ENCODE measurements at regions of chr6 and their contacts with region 1.

Region 1: DNA sequence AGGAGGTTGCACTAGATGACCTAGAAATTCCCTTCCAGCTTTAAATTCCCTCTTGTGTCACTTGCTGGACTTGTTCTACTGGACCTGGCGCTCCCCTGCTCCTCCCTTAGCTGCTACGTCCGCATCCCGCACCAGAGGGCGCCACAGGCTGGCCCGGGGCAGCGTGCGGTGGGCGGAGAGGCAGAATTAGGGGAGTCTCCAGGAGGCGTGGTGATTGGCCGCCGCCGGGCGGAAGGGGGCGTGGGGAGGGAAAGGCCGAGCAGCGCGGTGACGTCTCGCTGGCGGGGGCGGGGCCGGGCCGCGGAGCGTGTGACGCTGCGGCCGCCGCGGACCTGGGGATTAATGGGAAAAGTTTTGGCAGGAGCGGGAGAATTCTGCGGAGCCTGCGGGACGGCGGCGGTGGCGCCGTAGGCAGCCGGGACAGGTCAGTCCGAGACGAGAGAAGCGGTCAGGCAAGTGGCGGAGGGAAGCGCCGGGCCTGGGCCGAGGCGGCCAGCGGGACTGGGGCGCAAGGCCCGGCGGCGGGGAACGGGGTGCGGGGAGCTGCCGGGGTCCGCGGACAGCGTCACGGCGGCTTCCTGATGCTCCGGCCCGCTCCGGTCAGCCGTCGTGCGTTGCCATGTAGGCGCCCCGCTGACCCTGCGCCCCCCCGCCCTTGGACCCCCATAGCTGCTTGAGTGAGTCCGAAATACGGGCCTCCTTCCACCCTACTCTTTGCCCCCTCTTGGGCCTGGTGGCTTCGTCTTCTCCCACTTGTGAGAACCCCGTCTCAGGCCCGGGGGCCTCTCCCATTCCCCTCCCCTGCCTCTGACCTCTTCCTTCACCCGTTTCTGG is at the start of gene PPARD:
- DNase-seq: peak; percentile 38
- H3K4me3 ChIP-seq: peak within 1 kb of the TSS; percentile 84
- CTCF ChIP-seq: peak; percentile 100

Region 2: DNA sequence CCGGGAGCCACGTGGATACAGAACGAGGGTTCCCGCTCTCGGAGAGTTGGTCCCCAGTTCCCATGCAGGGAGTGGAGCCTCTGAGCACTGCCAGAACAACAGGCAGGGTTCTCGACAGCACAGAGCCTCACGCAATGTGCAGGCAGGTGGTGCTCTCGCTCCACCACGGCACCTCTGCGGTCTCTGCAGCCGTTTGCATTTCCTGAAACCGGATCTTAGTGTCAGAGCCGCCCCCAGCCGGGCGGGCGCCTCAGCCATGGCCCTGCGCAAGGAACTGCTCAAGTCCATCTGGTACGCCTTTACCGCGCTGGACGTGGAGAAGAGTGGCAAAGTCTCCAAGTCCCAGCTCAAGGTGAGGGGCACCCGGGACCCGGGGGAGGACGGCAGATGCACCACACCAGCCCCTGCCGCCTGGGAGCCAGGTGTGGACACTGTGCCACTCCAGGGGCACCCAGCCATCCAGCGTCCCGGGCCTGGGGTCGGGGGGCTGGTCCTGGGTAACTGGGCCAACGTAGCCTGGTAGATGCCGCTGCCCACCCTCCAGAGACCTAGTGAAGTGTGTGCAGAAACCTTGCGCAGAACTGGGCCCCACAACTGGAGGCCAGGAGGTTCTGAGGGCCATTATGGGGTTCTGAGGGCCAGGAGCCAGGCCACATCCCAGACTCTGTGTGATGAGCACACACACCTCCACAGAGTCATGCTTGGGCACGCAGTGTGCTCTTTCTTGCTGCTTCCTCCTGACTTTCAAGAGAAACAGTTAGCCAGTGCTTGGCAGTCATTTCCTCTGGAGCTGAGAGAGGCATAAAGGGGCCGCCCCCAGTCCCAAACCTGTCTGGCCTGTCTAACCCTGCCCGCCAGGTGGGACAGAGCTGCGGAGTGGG is 44.6 kb before region 1 on chr6 and contains the start of gene DEF6:
- CTCF ChIA-PET with region 1: interaction called, 15 read pairs
- POLR2A ChIA-PET with region 1: no interaction called
- DNase-seq: peak; percentile 17
- H3K4me3 ChIP-seq: peak within 1 kb of the TSS; percentile 55
- CTCF ChIP-seq: peak; percentile 80

Region 3: GRCh38 chr6:35354361-35355135 is 12.1 kb after region 1 on chr6:
- CTCF ChIA-PET with region 1: interaction called, 41 read pairs
- POLR2A ChIA-PET with region 1: interaction called, 5 read pairs
- DNase-seq: no peak
- H3K4me3 ChIP-seq: no peak overlapping the region
- CTCF ChIP-seq: no peak

Region 4: DNA sequence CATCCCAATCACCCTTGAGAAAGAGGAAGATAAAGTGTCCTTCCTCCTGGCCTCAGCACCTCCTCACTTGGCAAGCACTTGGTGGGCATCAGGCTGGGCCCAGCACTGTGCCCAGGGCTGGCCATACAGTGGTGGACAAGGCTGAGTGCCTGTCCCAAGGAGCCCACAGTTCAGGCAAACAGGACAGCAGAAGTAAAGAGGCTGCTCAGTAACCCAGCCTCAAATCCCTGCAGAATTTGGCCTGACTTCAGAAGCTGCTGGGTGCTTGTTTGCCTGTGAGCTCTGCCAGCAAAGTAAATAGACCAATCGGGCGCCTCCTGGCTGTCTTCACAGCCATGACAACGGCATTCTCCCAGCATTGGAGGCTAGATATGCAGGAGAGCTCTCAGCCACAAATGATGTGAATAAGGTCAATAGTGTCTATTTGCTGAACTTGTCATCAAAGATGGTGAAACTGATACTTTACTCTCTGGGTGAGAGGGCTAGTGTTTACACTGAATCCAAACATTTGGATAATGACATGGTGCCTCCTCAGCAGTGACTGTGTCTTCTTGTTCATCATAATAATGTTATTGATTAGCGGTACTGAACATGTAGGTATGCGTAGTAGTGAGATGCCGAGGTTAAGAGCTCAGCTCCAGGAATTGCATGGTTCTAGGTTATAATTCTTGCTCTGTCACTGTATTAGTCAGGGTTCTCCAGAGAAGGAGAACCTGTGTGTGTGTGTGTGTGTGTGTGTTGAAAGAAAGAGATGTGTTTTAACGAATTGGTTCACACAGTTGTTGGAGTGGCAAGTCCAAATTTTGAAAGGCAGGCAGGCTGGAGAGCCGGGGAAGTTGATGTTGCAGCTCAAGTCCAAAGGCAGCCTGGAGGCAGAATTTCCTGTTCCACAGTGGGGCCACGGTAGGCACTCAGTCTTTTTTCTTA is 72.9 kb after region 1 on chr6:
- CTCF ChIA-PET with region 1: interaction called, 125 read pairs
- POLR2A ChIA-PET with region 1: interaction called, 4 read pairs
- DNase-seq: peak; percentile 69
- H3K4me3 ChIP-seq: no peak overlapping the region
- CTCF ChIP-seq: peak; percentile 68

Region 5: DNA sequence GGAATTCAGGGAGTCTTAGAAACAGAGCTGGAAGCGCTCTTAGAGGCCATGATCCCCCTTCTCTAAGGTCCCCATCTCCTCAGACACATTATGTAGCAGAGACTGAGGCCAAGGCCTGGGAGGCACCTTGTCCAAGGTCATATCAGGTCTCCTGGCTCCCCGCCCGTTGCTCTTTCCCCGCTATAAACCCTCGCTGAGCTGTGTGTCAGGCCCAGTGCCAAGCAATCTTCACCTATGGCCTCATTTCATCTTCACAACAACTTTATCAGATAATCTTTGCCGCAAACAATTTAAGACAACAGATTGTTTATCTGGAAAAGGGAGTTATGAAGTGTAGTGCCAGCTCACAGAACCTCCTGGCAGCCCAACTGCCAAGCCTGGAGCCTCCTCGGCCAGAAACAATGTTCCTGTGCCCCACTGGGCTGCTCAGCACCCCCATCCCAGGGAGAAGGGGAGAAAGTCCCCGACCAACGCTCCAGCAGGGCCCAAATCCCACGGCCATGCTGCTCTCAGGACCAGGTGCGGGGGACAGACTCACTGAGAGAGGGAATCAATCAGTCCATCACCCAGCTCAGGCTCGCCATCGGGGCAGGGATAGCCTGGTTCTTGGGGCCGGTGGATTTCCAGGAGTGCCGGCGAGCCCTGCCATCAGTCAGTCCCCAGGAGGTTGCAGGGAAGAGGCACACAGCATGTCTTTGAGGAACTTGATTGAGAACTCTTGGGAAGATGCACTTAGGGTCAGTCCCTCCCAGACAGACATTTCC is 92.8 kb after region 1 on chr6:
- CTCF ChIA-PET with region 1: interaction called, 12 read pairs
- POLR2A ChIA-PET with region 1: no interaction called
- DNase-seq: no peak
- H3K4me3 ChIP-seq: no peak overlapping the region
- CTCF ChIP-seq: no peak

Region 6: GRCh38 chr6:35468181-35468979 is 125.9 kb after region 1 on chr6 and contains the start of gene RPL10A:
- CTCF ChIA-PET with region 1: interaction called, 68 read pairs
- POLR2A ChIA-PET with region 1: interaction called, 6 read pairs
- DNase-seq: peak; percentile 73
- H3K4me3 ChIP-seq: peak within 1 kb of the TSS; percentile 94
- CTCF ChIP-seq: peak; percentile 96